PC-9 (cell line): ENCODE measurements at regions of chr11 and their contacts with region 1.

Region 1: GRCh38 chr11:118634431-118635236 is 27.2 kb downstream of the PHLDB1 start:
- DNase-seq: no peak
- H3K4me3 ChIP-seq: no peak overlapping the region
- H3K27ac ChIP-seq: no peak overlapping the region
- H3K4me1 ChIP-seq: 0 out of 2 replicates have a peak, but pooled peaks cover 4% of the 10 kb centered on the region
- H3K27me3 ChIP-seq: no peaks in the 10 kb centered on the region
- CTCF ChIP-seq: no peak

Region 2: GRCh38 chr11:118145285-118146227 is 489.1 kb before region 1 on chr11:
- CTCF ChIA-PET with region 1: no interaction called
- POLR2A ChIA-PET with region 1: no interaction called
- intact Hi-C with region 1: no loop called
- DNase-seq: peak; percentile 81 to 91
- H3K4me3 ChIP-seq: peak overlapping the region; percentile 55
- H3K27ac ChIP-seq: no peak overlapping the region
- H3K4me1 ChIP-seq: peaks cover 6% of the 10 kb centered on the region; the same call in 1 of the 2 replicates
- H3K27me3 ChIP-seq: peaks cover 29% of the 10 kb centered on the region
- CTCF ChIP-seq: peak; percentile 94

Region 3: DNA sequence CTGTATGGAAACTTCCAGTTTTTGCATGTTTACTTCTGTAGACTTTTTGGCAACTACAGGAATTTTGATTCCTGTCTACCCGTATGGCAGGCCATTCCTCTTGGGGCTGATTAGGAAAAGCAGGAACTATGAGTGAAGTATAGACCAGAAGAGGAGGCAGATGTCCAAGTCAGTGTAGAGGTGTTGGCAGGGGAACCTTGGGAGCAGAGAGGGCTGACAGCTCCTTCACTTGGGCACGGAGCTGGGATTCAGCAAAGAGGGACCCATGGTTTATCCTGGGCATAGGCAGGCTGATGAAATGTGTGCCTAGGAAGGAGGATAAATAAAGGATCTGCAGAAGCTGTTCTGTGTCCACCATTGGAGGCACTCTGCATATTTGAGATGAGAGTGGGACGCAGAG is 11.8 kb after region 1 on chr11:
- CTCF ChIA-PET with region 1: interaction called, 5 read pairs
- POLR2A ChIA-PET with region 1: interaction called, 11 read pairs
- intact Hi-C with region 1: no loop called
- DNase-seq: no peak
- H3K4me3 ChIP-seq: no peak overlapping the region
- H3K27ac ChIP-seq: no peak overlapping the region
- H3K4me1 ChIP-seq: no peaks in the 10 kb centered on the region; the same call in 1 of the 2 replicates
- H3K27me3 ChIP-seq: no peaks in the 10 kb centered on the region
- CTCF ChIP-seq: no peak